PC-9 (cell line): ENCODE measurements at regions of chr1 and their contacts with region 1.

Region 1: DNA sequence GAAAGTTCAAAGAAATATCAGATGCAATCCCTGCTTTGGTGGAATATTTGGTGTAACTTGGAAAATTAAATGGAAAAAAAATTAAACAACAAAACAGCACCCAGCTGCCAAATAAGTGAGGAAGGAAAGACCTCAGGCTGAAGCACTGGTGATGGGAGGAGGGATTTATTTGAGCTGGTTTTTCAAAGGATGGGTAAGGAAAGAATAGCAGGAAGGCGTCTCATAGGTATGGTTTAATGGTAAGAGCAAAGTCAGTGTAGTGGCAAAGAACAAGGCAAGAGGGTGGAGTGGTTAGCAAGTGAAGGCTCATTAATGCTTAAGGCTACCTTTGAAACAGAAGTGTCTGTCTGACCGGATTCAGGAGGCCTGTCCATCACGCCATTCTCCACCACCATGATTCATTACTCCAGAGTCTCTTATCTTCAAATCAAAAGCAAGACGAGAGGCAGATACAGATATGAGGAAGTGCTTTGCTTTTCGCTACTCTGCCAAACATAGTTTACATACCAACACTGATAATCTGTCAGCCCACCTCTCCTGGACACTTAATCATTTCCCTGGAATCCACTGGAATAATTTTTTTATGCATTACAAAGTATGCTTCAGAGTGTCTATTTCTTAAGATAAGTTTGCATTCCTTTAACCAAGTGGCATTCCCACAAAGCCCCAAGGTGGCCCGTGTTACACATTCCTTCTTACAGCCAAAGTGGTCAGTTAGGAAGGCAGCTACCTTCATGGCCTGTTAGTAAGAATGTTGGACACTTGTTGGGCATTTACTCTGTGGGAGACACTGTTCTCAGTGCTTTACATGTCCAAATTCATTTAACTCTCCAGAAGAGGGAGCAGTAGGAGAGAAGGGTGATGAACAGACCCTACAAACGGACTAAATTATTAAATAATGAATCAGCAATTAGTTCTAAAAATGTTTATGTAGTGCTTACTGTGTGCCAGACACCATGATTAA is 146.6 kb downstream of the ROR1 start:
- DNase-seq: peak; percentile 83 to 100
- H3K4me3 ChIP-seq: no peak overlapping the region; the same call in 1 of the 2 replicates
- H3K27ac ChIP-seq: peak overlapping the region; percentile 97
- H3K4me1 ChIP-seq: peaks cover 69% of the 10 kb centered on the region
- H3K27me3 ChIP-seq: no peaks in the 10 kb centered on the region
- CTCF ChIP-seq: peak; percentile 67

Region 2: DNA sequence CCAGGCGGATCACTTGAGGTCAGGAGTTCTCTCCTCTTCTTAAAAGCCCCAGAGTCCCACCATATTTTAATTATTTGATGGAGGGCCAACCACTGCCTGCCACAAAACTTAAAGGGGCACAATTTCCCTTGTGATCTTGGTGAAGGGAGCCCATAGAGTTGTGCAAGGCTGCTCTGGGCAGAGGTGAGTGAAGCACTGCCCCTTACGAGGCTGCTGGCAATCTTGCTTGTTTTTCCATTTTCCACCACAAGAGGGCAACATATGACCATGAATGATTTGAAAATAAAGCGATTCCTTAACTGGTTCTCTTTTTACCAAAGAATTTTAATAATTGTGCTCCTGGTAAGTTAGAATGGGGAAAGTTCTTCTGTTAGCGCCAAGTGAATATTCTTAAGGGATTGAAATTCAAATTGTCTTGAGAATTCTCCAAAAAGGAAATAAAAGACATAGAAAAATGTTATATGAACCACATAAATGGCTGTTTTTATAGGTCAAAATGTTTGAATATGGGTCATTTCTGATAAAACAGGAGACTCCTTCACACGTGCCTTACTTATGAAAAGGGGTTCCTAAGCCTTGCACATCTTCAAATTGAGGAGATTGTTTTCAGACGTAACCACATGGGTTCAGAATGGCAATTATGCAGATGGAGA is 304.5 kb before region 1 on chr1:
- CTCF ChIA-PET with region 1: no interaction called
- POLR2A ChIA-PET with region 1: no interaction called
- intact Hi-C with region 1: loop called (anchors 5 kb)
- DNase-seq: peak; percentile 61 to 63
- H3K4me3 ChIP-seq: no peak overlapping the region
- H3K27ac ChIP-seq: no peak overlapping the region
- H3K4me1 ChIP-seq: peaks cover 38% of the 10 kb centered on the region
- H3K27me3 ChIP-seq: no peaks in the 10 kb centered on the region
- CTCF ChIP-seq: peak; percentile 91

Region 3: GRCh38 chr1:63773815-63774616 is 146.4 kb before region 1 on chr1 and contains the start of gene ROR1:
- CTCF ChIA-PET with region 1: interaction called, 4 read pairs
- POLR2A ChIA-PET with region 1: interaction called, 3 read pairs
- intact Hi-C with region 1: loop called (anchors 1 kb)
- DNase-seq: peak; percentile 72 to 91
- H3K4me3 ChIP-seq: peak within 1 kb of the TSS; percentile 93
- H3K27ac ChIP-seq: peak within 1 kb of the TSS; percentile 60
- H3K4me1 ChIP-seq: peaks cover 50% of the 10 kb centered on the region
- H3K27me3 ChIP-seq: no peaks in the 10 kb centered on the region
- CTCF ChIP-seq: peak; percentile 62
- total RNA-seq, gene ROR1: 16.0 and 19.0 TPM in 2 replicates

Region 4: GRCh38 chr1:63868268-63868781 is 52.1 kb before region 1 on chr1:
- CTCF ChIA-PET with region 1: interaction called, 6 read pairs
- POLR2A ChIA-PET with region 1: no interaction called
- intact Hi-C with region 1: loop called (anchors 1 kb)
- DNase-seq: peak; percentile 64 to 98
- H3K4me3 ChIP-seq: no peak overlapping the region; the same call in 1 of the 2 replicates
- H3K27ac ChIP-seq: peak overlapping the region; percentile 89
- H3K4me1 ChIP-seq: peaks cover 72% of the 10 kb centered on the region
- H3K27me3 ChIP-seq: no peaks in the 10 kb centered on the region
- CTCF ChIP-seq: no peak

Region 5: GRCh38 chr1:63901094-63901493 is 19.3 kb before region 1 on chr1:
- CTCF ChIA-PET with region 1: interaction called, 16 read pairs
- POLR2A ChIA-PET with region 1: interaction called, 4 read pairs
- intact Hi-C with region 1: no loop called
- DNase-seq: no peak
- H3K4me3 ChIP-seq: no peak overlapping the region
- H3K27ac ChIP-seq: no peak overlapping the region
- H3K4me1 ChIP-seq: no peaks in the 10 kb centered on the region
- H3K27me3 ChIP-seq: no peaks in the 10 kb centered on the region
- CTCF ChIP-seq: no peak

Region 6: DNA sequence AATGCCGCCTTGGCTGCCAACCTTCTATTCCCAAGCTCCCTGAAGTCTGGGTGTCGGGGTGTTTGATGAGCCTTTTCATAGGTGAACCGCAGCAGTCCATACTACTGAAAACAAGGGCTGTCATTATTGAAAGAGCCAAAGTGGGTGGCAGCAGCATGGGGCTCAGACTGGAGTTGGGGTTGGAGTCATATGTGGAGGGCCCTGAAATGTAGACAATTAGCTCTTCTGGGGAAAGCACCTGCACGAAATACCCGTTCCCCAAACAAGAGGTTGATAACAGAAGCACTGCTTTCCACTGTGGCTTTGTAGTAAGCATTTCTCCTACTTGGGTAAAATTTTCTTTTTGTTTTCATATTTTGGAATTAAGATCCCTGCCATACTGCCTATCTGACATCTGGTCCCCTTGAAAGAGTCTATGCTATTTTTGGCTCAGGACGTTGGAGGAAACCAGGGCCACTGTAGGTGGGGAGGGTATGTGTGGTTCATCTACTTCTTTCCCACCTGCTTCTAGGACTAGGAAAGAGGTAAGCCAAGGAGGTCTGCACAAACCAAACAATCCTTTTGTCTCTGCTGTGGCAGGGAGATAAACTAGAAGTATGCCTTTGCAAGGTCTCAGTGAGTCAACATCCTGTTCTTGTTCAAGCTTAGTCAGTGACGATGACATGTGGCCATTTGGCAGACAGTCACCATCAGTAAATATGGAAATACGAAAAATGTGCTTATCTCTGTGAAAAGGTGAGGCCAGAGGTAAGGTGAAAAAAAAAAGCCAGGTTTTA is 86.0 kb after region 1 on chr1:
- CTCF ChIA-PET with region 1: no interaction called
- POLR2A ChIA-PET with region 1: no interaction called
- intact Hi-C with region 1: loop called (anchors 1 kb)
- DNase-seq: peak; percentile 71 to 98
- H3K4me3 ChIP-seq: no peak overlapping the region; the same call in 1 of the 2 replicates
- H3K27ac ChIP-seq: peak overlapping the region; percentile 82
- H3K4me1 ChIP-seq: peaks cover 47% of the 10 kb centered on the region
- H3K27me3 ChIP-seq: no peaks in the 10 kb centered on the region
- CTCF ChIP-seq: no peak

Region 7: GRCh38 chr1:64171797-64172281 is 251.4 kb after region 1 on chr1:
- CTCF ChIA-PET with region 1: no interaction called
- POLR2A ChIA-PET with region 1: no interaction called
- intact Hi-C with region 1: loop called (anchors 1 kb)
- DNase-seq: peak; percentile 46 to 98
- H3K4me3 ChIP-seq: peak overlapping the region; percentile 22; the same call in 1 of the 2 replicates
- H3K27ac ChIP-seq: peak overlapping the region; percentile 97
- H3K4me1 ChIP-seq: peaks cover 47% of the 10 kb centered on the region
- H3K27me3 ChIP-seq: no peaks in the 10 kb centered on the region
- CTCF ChIP-seq: no peak